ENCODE measurements at regions of chr9 and their contacts with region 1.

Region 1: GRCh38 chr9:132944302-132945185 is at the start of gene TSC1:
- DNase-seq: peak; percentile 97
- ATAC-seq: peak; percentile 90
- H3K4me3 Mint-ChIP-seq: peak within 1 kb of the TSS; percentile 99
- H3K27ac Mint-ChIP-seq: peak within 1 kb of the TSS; percentile 100
- H3K4me1 Mint-ChIP-seq: peaks cover 26% of the 10 kb centered on the region
- H3K27me3 Mint-ChIP-seq: no peaks in the 10 kb centered on the region
- CTCF ChIP-seq: no peak
- total RNA-seq, gene TSC1: 20.7 to 23.2 TPM

Region 2: DNA sequence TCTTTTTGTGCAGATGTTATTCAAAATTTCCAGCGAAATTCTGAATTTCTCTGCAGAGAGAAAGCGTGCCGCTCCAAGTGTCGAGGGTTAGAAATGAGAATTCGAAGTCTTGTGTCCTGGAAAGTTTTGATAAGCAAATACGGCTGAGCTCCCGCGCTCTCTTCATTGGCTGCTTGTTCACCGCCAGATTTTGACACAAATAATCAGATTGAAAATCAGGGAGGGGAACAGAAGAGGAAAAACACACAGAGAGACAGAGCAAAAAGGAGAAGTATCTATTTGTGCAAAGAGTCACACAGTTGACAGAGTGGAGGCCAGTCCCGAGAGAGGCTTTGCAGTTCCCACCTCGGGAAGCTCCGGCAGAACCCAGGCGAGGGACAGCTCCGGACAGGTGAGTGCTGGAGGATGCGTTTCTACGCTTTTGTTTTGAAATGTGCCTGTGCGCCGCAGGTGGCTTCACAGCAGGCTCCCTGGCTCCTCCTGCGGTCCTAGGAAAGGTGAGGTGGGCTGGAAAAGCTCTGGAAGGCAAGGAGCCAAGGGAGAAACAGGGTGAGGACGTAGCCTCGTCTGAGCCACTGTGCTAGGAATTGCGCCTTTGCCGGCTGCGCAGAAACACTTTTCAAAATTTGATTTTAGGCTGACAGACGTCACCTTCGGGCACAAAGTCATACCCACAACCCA is 34.0 kb after region 1 on chr9 and contains the start of gene GFI1B:
- CTCF ChIA-PET with region 1: interaction called, 10 read pairs
- POLR2A ChIA-PET with region 1: no interaction called
- intact Hi-C with region 1: no loop called
- DNase-seq: no peak
- ATAC-seq: no peak
- H3K4me3 Mint-ChIP-seq: no peak within 1 kb of the TSS
- H3K27ac Mint-ChIP-seq: no peak within 1 kb of the TSS
- H3K4me1 Mint-ChIP-seq: peaks cover 2% of the 10 kb centered on the region
- H3K27me3 Mint-ChIP-seq: peaks cover 40% of the 10 kb centered on the region
- CTCF ChIP-seq: no peak
- total RNA-seq, gene GFI1B: not detected

Region 3: GRCh38 chr9:133030317-133031129 is 86.0 kb after region 1 on chr9 and contains the start of gene GTF3C5:
- CTCF ChIA-PET with region 1: no interaction called
- POLR2A ChIA-PET with region 1: interaction called, 13 read pairs
- intact Hi-C with region 1: no loop called
- DNase-seq: peak; percentile 96
- ATAC-seq: peak; percentile 98
- H3K4me3 Mint-ChIP-seq: peak within 1 kb of the TSS; percentile 87
- H3K27ac Mint-ChIP-seq: peak within 1 kb of the TSS; percentile 92
- H3K4me1 Mint-ChIP-seq: peaks cover 35% of the 10 kb centered on the region
- H3K27me3 Mint-ChIP-seq: no peaks in the 10 kb centered on the region
- CTCF ChIP-seq: no peak
- total RNA-seq, gene GTF3C5: 87.6 to 95.3 TPM